Activated naive CD4-positive, alpha-beta T cell treated with anti-CD3 and anti-CD28 coated beads for 36 hours (primary cell): ENCODE measurements at regions of chr13 and their contacts with region 1.

Region 1: DNA sequence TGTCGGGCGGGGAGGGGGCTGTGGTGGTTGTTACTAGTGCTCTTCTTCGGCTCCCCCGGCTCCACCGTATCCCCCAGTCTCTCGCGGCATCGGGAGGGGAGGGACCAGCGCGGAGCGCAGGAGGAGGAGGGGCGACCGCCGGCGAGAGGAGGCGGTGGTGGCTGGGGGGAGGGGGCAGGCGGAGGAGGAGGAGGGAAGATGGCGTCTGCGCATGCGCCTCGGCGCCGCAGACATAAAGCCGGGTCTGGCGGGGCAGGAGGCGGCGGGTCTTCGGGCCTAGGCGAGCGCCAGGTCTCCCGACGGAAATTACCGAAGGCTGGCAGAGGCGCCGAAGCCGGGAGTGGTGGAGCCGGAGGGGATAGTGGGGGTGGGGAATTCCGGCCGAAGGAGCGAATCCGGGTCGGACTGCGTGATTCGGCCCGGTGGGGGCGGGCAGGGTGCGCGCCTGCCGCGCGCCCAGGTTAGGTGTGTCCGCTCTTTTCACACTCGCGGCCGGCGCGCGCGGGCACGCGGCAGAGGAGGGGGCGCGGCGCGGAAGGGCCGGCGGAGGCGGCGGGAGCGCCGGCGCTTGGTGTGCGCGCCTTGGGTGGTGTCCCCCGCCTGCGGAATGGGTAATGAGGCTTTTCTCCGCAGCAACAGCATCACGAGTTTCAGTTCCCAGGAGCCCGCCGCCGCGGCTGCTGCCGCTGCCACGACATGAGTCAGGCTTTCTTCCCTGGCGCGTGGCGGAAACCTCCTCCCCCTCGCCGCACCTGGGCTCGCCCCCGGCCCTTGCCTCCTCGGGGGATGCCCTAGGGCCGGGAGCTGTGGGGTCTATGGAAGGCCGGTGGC is 1.3 kb upstream of the TSC22D1 start:
- DNase-seq: peak; percentile 95
- H3K4me3 Mint-ChIP-seq: peak overlapping the region; percentile 95
- H3K27ac Mint-ChIP-seq: peak overlapping the region; percentile 88
- H3K4me1 Mint-ChIP-seq: peaks cover 34% of the 10 kb centered on the region
- H3K27me3 Mint-ChIP-seq: peaks cover 2% of the 10 kb centered on the region

Region 2: DNA sequence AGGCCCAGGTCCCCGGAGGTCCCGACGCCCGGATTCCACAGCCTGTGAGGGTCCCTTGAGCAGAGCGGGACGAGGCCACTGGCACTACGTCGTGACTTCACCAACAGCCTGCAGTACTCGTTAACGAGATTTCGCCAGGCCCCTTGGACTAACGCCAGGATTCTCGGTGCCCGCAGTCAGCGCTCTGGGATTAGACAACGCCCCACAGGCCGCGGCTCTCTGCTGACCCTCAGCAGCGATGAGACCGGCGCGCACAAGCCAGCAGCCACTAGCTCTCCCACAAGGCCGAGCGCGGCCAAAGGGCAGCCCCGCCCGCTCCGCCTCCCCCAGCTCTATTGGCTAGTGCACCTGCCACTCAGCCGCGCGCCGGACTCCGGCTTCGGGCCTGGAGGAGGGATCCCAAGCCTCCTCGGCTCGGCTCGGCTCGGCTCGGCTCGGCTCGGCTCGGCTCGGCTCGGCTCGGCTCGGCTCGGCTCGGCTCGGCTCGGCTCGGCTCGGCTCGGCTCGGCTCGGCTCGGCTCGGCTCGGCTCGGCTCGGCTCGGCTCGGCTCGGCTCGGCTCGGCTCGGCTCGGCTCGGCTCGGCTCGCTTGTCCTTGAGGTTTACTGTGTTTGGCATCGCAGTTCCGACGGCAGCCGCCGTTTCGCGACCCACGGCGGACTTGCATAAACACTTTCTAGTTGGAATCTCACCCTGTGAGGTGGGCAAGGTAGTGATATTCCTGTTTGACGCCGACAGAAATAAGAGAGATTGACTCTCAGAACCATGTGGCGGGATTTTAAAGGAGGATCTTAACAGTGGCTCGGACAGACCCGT is 435.5 kb before region 1 on chr13:
- CTCF ChIA-PET with region 1: no interaction called
- intact Hi-C with region 1: loop called (anchors 5 kb)
- DNase-seq: peak; percentile 95
- H3K4me3 Mint-ChIP-seq: peak overlapping the region; percentile 89
- H3K27ac Mint-ChIP-seq: peak overlapping the region; percentile 86
- H3K4me1 Mint-ChIP-seq: peaks cover 14% of the 10 kb centered on the region
- H3K27me3 Mint-ChIP-seq: no peaks in the 10 kb centered on the region

Region 3: DNA sequence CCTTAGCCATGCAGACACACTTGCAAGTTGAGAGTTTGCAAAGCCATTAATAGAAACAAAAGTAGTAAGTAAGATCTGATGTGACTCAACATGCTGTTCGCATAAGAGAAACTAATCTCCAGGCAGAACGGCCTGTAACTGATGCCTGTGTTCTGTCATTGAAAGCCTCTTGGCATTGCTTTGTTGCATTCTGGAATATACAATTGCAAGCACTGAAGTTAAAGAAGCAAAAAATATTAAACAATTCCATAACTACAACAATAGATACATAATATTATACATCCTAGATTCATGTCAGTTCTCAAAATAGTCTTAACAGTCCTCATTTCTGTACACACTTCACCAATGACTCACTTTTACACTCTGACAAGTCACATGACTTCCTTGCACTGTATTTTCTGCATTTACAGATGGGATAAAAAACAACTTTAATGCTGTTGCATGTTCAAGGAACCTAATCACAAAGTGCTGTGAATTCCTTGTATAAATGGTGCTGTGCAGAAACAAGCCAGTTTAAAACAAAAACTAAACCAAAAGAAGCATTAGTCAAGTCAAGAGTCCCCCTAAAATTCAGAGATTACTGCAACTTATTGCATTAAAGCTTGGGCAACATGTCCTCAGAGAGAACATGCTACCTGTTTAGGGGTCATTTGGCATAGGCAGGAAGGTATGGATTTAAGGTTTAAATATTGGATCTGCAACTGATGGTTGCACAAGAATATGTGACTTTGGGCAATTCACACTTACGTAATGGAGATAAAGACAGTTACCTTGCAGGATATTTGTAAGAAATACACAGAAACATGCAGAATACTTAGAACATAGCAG is 283.3 kb before region 1 on chr13:
- CTCF ChIA-PET with region 1: no interaction called
- intact Hi-C with region 1: no loop called
- DNase-seq: peak; percentile 27
- H3K4me3 Mint-ChIP-seq: no peak overlapping the region
- H3K27ac Mint-ChIP-seq: peak overlapping the region; percentile 59
- H3K4me1 Mint-ChIP-seq: peaks cover 27% of the 10 kb centered on the region
- H3K27me3 Mint-ChIP-seq: peaks cover 18% of the 10 kb centered on the region

Region 4: GRCh38 chr13:44422755-44423532 is 154.5 kb before region 1 on chr13:
- CTCF ChIA-PET with region 1: no interaction called
- intact Hi-C with region 1: no loop called
- DNase-seq: no peak
- H3K4me3 Mint-ChIP-seq: no peak overlapping the region
- H3K27ac Mint-ChIP-seq: no peak overlapping the region
- H3K4me1 Mint-ChIP-seq: no peaks in the 10 kb centered on the region
- H3K27me3 Mint-ChIP-seq: peaks cover 15% of the 10 kb centered on the region

Region 5: DNA sequence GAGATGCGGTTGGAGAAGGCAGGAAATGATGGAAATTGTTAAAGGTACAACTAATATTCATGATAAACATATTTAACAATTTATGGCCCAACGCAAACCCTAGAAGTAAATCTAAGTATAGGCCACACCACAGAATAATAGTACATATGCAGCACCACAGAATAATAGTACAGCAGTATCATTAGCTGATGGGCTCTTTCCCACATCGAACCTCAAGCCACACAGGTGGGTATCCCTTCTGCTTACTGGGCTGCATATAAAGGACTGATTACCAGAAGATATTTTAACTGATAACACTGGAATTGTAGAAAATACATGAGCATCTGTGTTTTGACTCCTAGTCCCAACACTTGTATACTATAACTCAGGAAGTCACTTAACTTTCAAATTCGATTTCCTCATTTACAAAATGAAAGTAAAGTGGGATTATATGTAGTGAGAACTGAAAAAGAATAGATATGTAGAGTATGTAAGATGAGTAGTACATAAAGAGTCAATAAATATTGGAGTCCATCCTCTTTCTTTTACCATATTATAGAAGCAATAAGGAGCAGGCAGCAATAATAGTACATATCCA is 92.8 kb before region 1 on chr13:
- CTCF ChIA-PET with region 1: interaction called, 5 read pairs
- intact Hi-C with region 1: loop called (anchors 1 kb)
- DNase-seq: no peak
- H3K4me3 Mint-ChIP-seq: peak overlapping the region; percentile 50
- H3K27ac Mint-ChIP-seq: no peak overlapping the region
- H3K4me1 Mint-ChIP-seq: peaks cover 9% of the 10 kb centered on the region
- H3K27me3 Mint-ChIP-seq: no peaks in the 10 kb centered on the region

Region 6: DNA sequence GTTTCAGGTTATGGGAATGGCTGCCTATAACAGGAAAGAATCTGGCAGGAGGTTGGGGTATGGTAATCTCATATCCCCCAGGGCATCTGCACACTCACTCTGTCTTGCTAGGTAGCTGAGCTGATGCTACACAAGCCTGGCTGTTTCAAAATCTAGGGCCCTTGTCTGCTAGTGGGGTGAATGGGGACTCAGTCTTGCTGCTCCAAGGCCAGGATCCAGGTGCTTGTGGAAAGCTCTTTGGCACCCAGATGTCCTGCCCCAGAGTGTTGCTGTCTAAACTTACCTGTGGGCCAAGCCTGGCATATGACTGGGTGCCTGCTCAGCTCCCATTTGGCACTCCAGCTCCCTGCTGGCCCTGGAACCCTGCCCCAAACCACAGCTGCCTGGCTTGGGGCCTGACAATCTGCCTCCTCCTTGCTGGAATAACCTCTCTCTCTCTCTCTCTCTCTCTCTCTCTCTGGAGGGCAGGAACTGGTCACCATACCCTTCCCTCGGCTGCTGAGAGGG is 156.8 kb after region 1 on chr13:
- CTCF ChIA-PET with region 1: no interaction called
- intact Hi-C with region 1: no loop called
- DNase-seq: no peak
- H3K4me3 Mint-ChIP-seq: no peak overlapping the region
- H3K27ac Mint-ChIP-seq: no peak overlapping the region
- H3K4me1 Mint-ChIP-seq: no peaks in the 10 kb centered on the region
- H3K27me3 Mint-ChIP-seq: peaks cover 3% of the 10 kb centered on the region

Region 7: GRCh38 chr13:44768239-44768638 is 190.8 kb after region 1 on chr13:
- CTCF ChIA-PET with region 1: no interaction called
- intact Hi-C with region 1: loop called (anchors 1 kb)
- DNase-seq: peak; percentile 72
- H3K4me3 Mint-ChIP-seq: no peak overlapping the region
- H3K27ac Mint-ChIP-seq: peak overlapping the region; percentile 85
- H3K4me1 Mint-ChIP-seq: peaks cover 27% of the 10 kb centered on the region
- H3K27me3 Mint-ChIP-seq: no peaks in the 10 kb centered on the region

Region 8: DNA sequence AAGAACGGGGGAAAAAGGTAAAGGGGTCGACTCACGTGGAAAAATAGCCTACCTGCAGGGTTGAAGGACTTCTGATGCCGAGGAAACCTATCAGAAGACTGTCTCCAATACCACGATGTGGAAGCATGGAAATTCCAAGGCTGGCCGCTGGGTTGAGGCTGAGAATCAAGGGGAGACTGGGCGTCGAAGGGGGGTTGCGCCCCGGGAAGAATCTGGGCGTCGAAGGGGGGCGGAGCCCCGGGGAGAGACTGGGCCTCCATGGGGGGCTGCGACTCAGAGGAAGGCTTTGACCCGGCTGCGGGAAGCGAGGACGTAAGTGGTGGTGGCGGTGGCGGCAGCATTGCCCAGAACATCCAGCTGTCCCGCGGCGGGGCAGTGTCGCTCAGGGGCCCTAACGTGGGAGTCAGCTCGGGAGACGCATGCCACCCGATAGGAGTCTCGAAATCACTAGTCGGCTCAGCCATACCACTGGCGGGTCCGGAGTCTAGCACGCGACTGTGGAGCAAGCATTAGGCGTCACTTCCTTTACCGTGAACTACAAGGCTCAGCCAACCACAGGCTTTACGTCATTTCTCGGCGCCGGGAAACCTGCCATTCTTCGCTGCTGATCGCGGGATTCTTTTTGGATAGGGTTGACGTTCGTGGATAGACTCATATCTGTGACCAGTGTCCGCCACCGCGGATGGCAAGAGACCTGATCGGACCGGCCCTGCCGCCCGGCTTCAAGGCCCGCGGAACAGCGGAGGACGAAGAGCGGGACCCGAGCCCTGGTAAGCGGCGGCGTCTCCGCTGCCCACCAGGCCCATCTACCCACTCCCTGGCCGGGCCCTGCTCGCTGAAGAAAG is 411.7 kb after region 1 on chr13 and contains the starts of genes GPALPP1 and NUFIP1:
- CTCF ChIA-PET with region 1: no interaction called
- intact Hi-C with region 1: loop called (anchors 1 kb)
- DNase-seq: peak; percentile 98
- H3K4me3 Mint-ChIP-seq: peak within 1 kb of the TSS; percentile 98
- H3K27ac Mint-ChIP-seq: peak within 1 kb of the TSS; percentile 88
- H3K4me1 Mint-ChIP-seq: peaks cover 60% of the 10 kb centered on the region
- H3K27me3 Mint-ChIP-seq: no peaks in the 10 kb centered on the region
- total RNA-seq, gene GPALPP1: 25.0 to 26.9 TPM
- total RNA-seq, gene NUFIP1: 7.2 to 8.9 TPM

Region 9: DNA sequence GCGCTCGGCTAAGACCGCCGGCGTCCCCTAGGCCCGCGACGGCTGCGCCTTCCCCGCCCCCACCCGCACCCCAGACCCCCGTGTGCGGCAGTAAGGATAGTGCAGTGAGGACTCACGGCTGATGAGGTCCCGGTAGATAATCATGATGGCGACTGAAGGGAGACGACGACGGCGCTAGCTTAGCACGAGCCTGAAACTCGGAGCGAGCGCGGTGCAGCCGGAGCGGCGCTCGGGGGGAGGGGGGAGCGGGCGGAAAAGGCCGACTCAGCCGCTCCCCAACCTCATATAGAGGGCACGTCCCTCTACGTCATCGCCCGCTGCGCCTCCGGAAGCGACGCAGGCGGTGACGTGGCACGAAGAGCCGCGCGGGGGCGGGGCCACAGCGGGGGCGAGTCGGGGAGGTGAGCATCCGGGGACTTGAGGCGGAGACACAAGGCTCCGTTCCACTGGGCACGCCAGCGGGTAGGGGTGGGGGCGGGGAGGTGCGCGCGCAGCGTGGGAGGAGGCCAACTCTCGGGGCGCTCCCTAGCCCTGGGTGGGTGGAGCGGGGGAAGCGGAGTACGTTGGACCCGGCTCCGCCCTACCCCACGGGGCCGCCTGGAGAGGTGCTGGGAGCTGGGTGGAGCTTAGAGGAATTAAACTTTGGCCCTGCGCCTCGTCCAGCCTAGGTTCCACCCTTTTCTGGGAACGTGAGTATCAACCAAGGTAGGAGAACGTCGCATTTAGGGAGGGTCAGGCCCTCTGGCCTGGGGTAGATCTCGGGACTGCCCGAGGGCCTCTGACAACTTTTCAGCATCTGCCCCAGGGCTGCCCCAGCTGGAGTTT is 763.7 kb after region 1 on chr13 and contains the start of gene TPT1:
- CTCF ChIA-PET with region 1: no interaction called
- intact Hi-C with region 1: loop called (anchors 1 kb)
- DNase-seq: peak; percentile 100
- H3K4me3 Mint-ChIP-seq: peak within 1 kb of the TSS; percentile 91
- H3K27ac Mint-ChIP-seq: peak within 1 kb of the TSS; percentile 99
- H3K4me1 Mint-ChIP-seq: peaks cover 43% of the 10 kb centered on the region
- H3K27me3 Mint-ChIP-seq: no peaks in the 10 kb centered on the region
- total RNA-seq, gene TPT1: 3,331 to 3,631 TPM

Region 10: GRCh38 chr13:46052319-46053161 is 1475.1 kb after region 1 on chr13 and contains the start of gene ZC3H13:
- CTCF ChIA-PET with region 1: no interaction called
- intact Hi-C with region 1: loop called (anchors 5 kb)
- DNase-seq: peak; percentile 97
- H3K4me3 Mint-ChIP-seq: peak within 1 kb of the TSS; percentile 81
- H3K27ac Mint-ChIP-seq: peak within 1 kb of the TSS; percentile 94
- H3K4me1 Mint-ChIP-seq: peaks cover 29% of the 10 kb centered on the region
- H3K27me3 Mint-ChIP-seq: peaks cover 4% of the 10 kb centered on the region
- total RNA-seq, gene ZC3H13: 38.2 to 42.2 TPM